ENCODE measurements at regions of chr18 and their contacts with region 1.

Region 1: GRCh38 chr18:58748899-58749595 is 77.8 kb downstream of the MALT1 start:
- DNase-seq: no peak
- H3K4me3 Mint-ChIP-seq: no peak overlapping the region
- H3K27ac Mint-ChIP-seq: no peak overlapping the region
- H3K4me1 Mint-ChIP-seq: no peaks in the 10 kb centered on the region
- H3K27me3 Mint-ChIP-seq: no peaks in the 10 kb centered on the region

Region 2: DNA sequence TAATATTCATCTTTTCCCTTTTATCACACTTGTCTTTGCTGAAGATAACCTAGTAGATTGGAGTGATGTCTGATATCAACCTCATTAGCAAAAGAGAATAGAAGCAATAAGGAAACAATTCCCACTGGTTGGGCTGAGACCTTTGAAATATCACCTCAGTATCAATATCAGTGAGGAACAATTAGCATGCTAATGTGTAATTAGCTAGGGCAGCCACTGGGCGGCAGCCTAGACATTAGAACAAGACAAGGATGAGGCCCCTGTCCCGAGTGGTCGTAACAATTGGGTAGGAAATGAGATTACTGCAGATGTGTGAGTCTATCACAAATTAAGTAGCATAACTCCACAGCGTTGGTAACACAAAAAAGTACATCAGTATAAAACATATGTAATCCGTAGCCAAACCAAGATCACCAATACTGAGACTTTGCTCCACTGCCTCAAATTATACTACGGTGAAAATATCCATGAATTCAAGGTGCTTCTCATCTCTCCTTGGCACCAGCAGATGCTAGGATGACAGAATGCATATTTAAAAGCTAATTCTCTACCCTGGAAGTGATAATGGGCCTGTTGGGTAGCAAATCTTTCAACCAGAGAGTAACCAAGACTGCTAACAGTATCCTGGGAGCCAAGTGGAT is 219.2 kb before region 1 on chr18:
- CTCF ChIA-PET with region 1: interaction called, 10 read pairs
- intact Hi-C with region 1: no loop called
- DNase-seq: peak; percentile 80
- H3K4me3 Mint-ChIP-seq: no peak overlapping the region
- H3K27ac Mint-ChIP-seq: no peak overlapping the region
- H3K4me1 Mint-ChIP-seq: peaks cover 20% of the 10 kb centered on the region
- H3K27me3 Mint-ChIP-seq: peaks cover 3% of the 10 kb centered on the region

Region 3: GRCh38 chr18:58727776-58728500 is 21.1 kb before region 1 on chr18:
- CTCF ChIA-PET with region 1: no interaction called
- intact Hi-C with region 1: no loop called
- DNase-seq: no peak
- H3K4me3 Mint-ChIP-seq: no peak overlapping the region
- H3K27ac Mint-ChIP-seq: no peak overlapping the region
- H3K4me1 Mint-ChIP-seq: peaks cover 3% of the 10 kb centered on the region
- H3K27me3 Mint-ChIP-seq: no peaks in the 10 kb centered on the region